Calu3 (cell line): ENCODE measurements at regions of chr4 and their contacts with region 1.

Region 1: DNA sequence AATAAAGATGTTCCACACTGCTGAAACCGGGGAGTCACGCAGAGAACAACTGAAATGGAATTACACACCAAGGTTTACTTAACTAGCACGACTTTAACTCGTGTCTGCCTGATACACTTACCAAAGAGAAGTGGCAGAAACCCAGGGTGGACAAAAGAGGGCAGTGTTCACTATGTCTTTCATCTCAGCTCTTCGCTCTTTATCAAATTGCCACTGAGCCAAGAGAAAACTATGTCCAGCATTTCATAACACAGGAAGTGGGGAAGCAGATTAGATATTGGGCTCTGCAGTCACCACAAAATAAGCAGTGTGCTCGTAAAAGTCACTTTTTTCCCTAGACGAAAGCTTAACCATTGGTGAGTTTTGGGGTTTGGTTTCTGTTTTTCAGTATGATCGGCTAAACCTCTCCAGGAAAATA is 155.7 kb downstream of the CHIC2 start:
- DNase-seq: peak; percentile 38
- H3K4me3 Mint-ChIP-seq: no peak overlapping the region
- H3K27ac Mint-ChIP-seq: no peak overlapping the region
- H3K4me1 Mint-ChIP-seq: peaks cover 14% of the 10 kb centered on the region
- H3K27me3 Mint-ChIP-seq: peaks cover 9% of the 10 kb centered on the region
- CTCF ChIP-seq: peak; percentile 44

Region 2: DNA sequence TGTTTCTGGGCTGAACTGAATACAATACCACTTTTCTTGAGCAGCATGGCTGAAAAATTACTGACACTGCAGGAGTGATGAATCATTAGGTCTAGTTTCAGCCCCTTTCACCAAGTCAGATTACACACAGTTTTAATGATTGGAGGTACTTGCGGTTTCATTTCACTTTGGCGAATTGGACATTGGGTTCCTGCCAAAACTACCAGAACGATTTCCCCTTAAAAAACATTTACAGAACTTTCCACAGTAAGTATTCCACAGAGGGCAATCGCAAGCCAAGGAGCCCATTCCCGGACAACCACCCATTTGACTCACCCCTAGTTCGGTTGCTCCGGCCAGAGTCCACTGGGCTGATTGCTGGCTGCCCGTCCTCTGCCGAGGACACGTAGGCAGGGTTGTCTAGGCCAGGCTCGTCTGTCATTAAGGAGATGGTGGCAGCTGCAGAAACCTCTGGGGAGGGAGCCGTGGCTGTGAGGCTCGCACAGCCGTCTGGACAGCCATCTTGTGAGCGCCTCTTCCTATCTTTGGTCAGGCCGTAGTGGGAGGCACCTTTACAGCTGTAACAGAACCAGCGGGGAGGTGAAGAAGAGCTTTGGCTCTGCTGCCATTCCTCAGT is 400.9 kb before region 1 on chr4:
- CTCF ChIA-PET with region 1: no interaction called
- intact Hi-C with region 1: loop called (anchors 10 kb)
- DNase-seq: peak; percentile 37
- H3K4me3 Mint-ChIP-seq: peak overlapping the region; percentile 78
- H3K27ac Mint-ChIP-seq: peak overlapping the region; percentile 72
- H3K4me1 Mint-ChIP-seq: no peaks in the 10 kb centered on the region
- H3K27me3 Mint-ChIP-seq: no peaks in the 10 kb centered on the region
- CTCF ChIP-seq: no peak

Region 3: DNA sequence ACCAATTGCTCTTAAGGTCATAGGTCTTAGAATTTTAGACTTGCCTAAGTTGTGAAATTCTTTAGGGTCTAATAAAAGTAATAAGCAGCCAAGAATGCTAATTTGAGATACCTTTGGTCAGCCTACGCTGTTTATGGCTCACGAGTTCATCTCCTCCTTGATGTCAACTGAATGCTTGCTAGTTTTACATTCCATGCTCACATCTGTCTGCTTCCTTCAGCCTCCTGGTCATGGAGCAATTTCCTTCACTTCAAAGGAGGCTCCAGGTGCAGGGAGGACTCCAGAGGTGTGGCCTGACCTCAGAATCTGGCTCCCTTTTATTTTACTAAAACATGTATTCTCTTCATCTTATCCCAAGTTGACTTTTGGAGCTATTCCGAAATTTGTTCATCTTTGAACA is 294.1 kb before region 1 on chr4:
- CTCF ChIA-PET with region 1: no interaction called
- intact Hi-C with region 1: loop called (anchors 10 kb)
- DNase-seq: peak; percentile 24
- H3K4me3 Mint-ChIP-seq: no peak overlapping the region
- H3K27ac Mint-ChIP-seq: no peak overlapping the region
- H3K4me1 Mint-ChIP-seq: no peaks in the 10 kb centered on the region
- H3K27me3 Mint-ChIP-seq: no peaks in the 10 kb centered on the region
- CTCF ChIP-seq: no peak

Region 4: DNA sequence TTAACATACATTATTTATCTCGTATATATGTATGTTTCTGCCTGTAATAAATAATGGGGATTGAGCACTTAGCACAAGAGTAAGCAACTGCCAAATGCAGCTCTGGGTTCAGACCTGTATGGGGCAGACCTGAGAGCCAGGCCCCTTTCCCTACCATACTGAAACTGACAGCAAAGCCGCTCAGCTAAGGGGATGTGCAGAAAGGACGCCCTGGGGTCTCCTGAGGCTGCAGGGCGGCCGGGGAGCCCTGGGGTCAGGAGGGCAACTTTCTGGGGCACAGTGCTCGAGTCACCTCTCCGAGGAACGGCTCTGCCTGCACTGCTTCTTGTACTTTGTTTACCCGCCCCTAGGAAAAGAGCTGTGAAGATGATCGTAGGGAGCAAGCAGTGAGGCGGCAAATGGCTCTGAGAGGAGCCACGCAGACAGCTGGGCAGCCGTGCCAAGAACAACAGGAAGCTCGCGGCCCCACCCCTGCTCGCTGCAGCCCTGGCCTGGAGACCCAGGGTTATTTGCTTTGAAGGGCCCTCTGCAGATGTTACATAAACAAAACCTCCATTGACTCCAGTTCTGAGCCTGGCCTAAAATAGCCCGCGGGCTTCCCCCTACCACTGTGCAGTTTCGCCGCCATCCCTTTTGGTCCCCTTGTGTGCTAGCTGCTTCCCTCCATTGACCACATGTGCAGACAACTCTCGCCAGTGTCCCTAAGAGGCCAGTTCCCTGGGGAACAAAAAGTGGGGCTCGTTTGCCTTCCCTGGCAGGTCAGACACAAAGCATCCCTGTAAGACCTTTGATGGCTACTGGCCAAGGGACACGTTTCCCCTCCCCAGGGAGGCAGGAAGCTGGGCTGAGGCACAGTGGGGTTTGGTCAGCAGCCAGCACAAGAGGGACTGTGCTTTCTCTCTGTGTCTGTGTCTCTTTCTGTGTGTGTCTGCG is 206.1 kb before region 1 on chr4:
- CTCF ChIA-PET with region 1: interaction called, 3 read pairs
- intact Hi-C with region 1: loop called (anchors 10 kb)
- DNase-seq: peak; percentile 39
- H3K4me3 Mint-ChIP-seq: peak overlapping the region; percentile 28
- H3K27ac Mint-ChIP-seq: no peak overlapping the region
- H3K4me1 Mint-ChIP-seq: peaks cover 17% of the 10 kb centered on the region
- H3K27me3 Mint-ChIP-seq: no peaks in the 10 kb centered on the region
- CTCF ChIP-seq: no peak

Region 5: GRCh38 chr4:54217642-54218495 is 309.2 kb after region 1 on chr4:
- CTCF ChIA-PET with region 1: interaction called, 6 read pairs
- intact Hi-C with region 1: loop called (anchors 1 kb)
- DNase-seq: peak; percentile 66
- H3K4me3 Mint-ChIP-seq: peak overlapping the region; percentile 58
- H3K27ac Mint-ChIP-seq: no peak overlapping the region
- H3K4me1 Mint-ChIP-seq: peaks cover 14% of the 10 kb centered on the region
- H3K27me3 Mint-ChIP-seq: peaks cover 9% of the 10 kb centered on the region
- CTCF ChIP-seq: peak; percentile 74

Region 6: DNA sequence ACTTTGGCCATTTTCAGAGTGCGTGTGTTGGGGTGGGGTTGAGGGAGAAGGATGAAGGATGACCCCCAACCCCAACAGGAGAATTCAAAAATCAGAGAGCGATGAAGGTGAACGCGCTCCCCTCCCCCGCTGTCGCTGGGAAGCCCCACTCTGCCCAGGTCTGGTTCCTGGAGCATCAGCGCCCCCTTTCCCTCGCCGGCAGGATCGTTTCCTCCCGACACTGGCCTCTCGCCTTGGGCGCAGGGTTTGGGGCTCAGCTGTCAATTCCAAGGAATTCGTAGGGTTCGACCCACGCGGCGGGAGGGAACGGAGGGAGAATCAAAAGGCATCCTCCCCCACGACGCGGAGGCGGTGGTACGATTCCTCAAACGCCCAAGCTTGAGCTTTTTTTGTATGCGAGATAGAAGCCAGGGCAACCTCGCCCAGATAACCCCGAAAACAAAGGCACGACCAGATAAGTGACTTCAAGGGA is 319.4 kb after region 1 on chr4:
- CTCF ChIA-PET with region 1: interaction called, 15 read pairs
- intact Hi-C with region 1: loop called (anchors 1 kb)
- DNase-seq: peak; percentile 73
- H3K4me3 Mint-ChIP-seq: peak overlapping the region; percentile 71
- H3K27ac Mint-ChIP-seq: no peak overlapping the region
- H3K4me1 Mint-ChIP-seq: peaks cover 21% of the 10 kb centered on the region
- H3K27me3 Mint-ChIP-seq: peaks cover 90% of the 10 kb centered on the region
- CTCF ChIP-seq: peak; percentile 68

Region 7: GRCh38 chr4:54233277-54233696 is 324.6 kb after region 1 on chr4:
- CTCF ChIA-PET with region 1: interaction called, 15 read pairs
- intact Hi-C with region 1: loop called (anchors 1 kb)
- DNase-seq: peak; percentile 86
- H3K4me3 Mint-ChIP-seq: peak overlapping the region; percentile 76
- H3K27ac Mint-ChIP-seq: no peak overlapping the region
- H3K4me1 Mint-ChIP-seq: peaks cover 18% of the 10 kb centered on the region
- H3K27me3 Mint-ChIP-seq: peaks cover 53% of the 10 kb centered on the region
- CTCF ChIP-seq: peak; percentile 40